Calu3 (cell line): ENCODE measurements at regions of chr14 and their contacts with region 1.

Region 1: DNA sequence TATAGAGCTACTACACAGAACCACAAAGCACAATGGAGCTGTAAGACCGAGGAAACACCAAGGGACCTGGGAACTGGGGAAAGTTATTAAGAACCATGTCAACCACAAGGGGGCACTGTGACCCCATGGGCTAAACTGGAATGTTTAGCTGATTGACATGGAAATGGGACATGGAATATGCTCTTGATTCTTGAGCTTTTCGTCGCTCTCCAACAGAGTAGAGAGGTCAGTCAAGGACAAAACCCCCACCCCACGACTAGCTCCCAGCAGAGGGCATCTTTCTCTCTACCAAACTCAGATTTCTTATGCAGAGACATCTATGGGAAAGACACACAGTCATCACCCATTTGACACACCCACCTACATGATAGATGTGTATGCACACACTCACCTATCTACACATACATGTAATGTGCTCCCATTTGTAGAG is 10.1 kb downstream of the NDRG2 start:
- DNase-seq: peak; percentile 85
- H3K4me3 Mint-ChIP-seq: no peak overlapping the region
- H3K27ac Mint-ChIP-seq: no peak overlapping the region
- H3K4me1 Mint-ChIP-seq: no peaks in the 10 kb centered on the region
- H3K27me3 Mint-ChIP-seq: peaks cover 38% of the 10 kb centered on the region
- CTCF ChIP-seq: peak; percentile 73

Region 2: DNA sequence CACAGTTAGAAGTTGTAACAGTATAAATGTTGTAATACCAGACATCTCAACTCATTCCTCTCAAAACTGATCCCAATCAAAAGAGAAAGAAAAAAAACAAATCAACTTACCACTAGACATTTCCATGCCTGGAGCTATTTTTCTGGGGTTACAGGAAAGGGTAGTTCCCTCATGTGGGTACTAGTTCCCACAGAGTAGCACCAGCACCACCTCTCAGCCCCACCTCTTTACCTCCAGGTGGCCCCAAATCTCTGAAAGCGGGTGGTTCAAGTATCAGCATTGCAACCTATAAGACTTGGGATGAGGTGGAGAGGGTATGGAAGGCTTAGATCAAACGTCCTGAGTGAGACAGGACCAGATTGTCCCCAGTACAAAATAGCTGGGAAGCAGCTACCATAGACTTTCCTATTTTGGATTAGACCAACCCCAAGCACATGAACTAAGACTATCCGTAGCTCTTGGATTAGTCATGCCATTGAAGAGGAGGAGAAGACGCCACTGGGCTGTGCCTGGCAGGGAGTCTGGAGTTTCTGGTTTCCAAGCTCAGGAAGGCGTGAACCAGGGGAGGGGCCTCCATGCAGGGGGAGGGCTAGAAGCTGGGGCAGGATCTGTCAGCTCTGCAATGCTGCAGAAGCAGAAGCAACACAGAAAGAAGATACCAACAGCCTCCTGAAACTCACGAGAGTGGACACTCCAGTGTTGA is 16.0 kb before region 1 on chr14 and contains the start of gene SLC39A2:
- CTCF ChIA-PET with region 1: interaction called, 15 read pairs
- intact Hi-C with region 1: no loop called
- DNase-seq: peak; percentile 31
- H3K4me3 Mint-ChIP-seq: no peak within 1 kb of the TSS
- H3K27ac Mint-ChIP-seq: peak within 1 kb of the TSS; percentile 37
- H3K4me1 Mint-ChIP-seq: peaks cover 32% of the 10 kb centered on the region
- H3K27me3 Mint-ChIP-seq: no peaks in the 10 kb centered on the region
- CTCF ChIP-seq: no peak
- total RNA-seq, gene SLC39A2: not detected in 2 replicates

Region 3: GRCh38 chr14:21033133-21033698 is 18.4 kb after region 1 on chr14:
- CTCF ChIA-PET with region 1: interaction called, 10 read pairs
- intact Hi-C with region 1: no loop called
- DNase-seq: no peak
- H3K4me3 Mint-ChIP-seq: no peak overlapping the region
- H3K27ac Mint-ChIP-seq: no peak overlapping the region
- H3K4me1 Mint-ChIP-seq: peaks cover 5% of the 10 kb centered on the region
- H3K27me3 Mint-ChIP-seq: peaks cover 83% of the 10 kb centered on the region
- CTCF ChIP-seq: no peak

Region 4: GRCh38 chr14:21071225-21072030 is 56.7 kb after region 1 on chr14:
- CTCF ChIA-PET with region 1: interaction called, 36 read pairs
- intact Hi-C with region 1: no loop called
- DNase-seq: peak; percentile 58
- H3K4me3 Mint-ChIP-seq: peak overlapping the region; percentile 97
- H3K27ac Mint-ChIP-seq: peak overlapping the region; percentile 35
- H3K4me1 Mint-ChIP-seq: peaks cover 8% of the 10 kb centered on the region
- H3K27me3 Mint-ChIP-seq: peaks cover 34% of the 10 kb centered on the region
- CTCF ChIP-seq: no peak

Region 5: GRCh38 chr14:21092273-21093011 is 77.7 kb after region 1 on chr14:
- CTCF ChIA-PET with region 1: interaction called, 18 read pairs
- intact Hi-C with region 1: loop called (anchors 2 kb)
- DNase-seq: peak; percentile 90
- H3K4me3 Mint-ChIP-seq: peak overlapping the region; percentile 24
- H3K27ac Mint-ChIP-seq: peak overlapping the region; percentile 3
- H3K4me1 Mint-ChIP-seq: peaks cover 8% of the 10 kb centered on the region
- H3K27me3 Mint-ChIP-seq: no peaks in the 10 kb centered on the region
- CTCF ChIP-seq: peak; percentile 99

Region 6: DNA sequence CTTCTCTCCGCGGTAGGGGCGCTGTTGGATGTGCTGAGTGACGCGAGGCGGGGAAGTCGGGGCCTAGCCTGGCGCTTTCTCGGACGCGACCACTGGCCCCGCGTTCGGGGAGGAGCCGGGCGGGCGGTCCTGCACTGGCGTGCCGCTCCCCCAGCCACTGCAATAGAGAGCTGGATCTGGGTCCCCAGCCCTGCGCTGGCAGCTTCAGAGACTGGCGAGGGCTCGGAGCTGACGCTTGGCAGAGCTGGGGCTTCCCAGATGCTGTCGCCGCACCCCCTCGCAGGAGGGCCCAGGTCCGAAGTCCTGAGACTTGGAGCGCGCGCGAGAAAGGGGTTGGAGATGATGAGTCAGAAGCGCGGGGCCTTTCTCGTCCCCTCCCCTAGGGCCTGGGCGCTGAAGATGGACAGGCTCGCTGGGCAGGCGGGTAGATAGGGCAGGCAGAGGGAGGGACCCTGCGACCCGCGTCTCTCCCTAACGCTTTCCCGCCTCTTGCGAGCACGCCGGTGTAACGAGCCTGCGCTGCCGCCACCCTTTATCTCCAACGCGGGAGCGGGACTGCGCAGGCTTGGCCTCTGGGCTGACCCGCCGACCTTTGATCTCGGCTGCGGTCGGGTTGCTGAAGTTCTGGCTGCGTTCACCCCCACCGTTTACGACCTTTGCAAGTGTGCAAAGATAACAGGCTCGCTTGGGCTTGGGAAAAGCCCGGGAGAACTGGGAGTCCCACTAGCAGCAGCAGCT is 89.1 kb after region 1 on chr14:
- CTCF ChIA-PET with region 1: interaction called, 51 read pairs
- intact Hi-C with region 1: loop called (anchors 1 kb)
- DNase-seq: peak; percentile 93
- H3K4me3 Mint-ChIP-seq: peak overlapping the region; percentile 77
- H3K27ac Mint-ChIP-seq: peak overlapping the region; percentile 57
- H3K4me1 Mint-ChIP-seq: peaks cover 56% of the 10 kb centered on the region
- H3K27me3 Mint-ChIP-seq: no peaks in the 10 kb centered on the region
- CTCF ChIP-seq: peak; percentile 68

Region 7: DNA sequence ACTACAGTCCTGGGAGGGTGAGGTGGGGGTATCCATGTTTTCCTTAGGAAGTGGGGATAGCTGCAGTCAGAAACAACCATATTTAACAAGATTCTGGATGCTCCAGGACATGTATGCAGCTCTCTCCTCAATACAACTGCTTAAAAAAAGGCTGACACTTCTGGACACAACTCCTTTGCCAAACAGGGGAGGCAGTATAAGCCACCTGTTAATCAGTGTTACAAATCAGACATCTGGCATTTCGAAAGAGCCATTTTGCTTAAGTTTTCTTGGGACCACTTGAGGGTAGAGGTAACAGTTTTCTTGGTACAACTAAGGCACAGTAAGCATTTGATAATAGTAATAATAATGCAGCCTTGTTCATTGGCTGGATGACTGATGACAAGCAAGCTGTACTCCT is 312.2 kb after region 1 on chr14:
- CTCF ChIA-PET with region 1: no interaction called
- intact Hi-C with region 1: no loop called
- DNase-seq: no peak
- H3K4me3 Mint-ChIP-seq: no peak overlapping the region
- H3K27ac Mint-ChIP-seq: no peak overlapping the region
- H3K4me1 Mint-ChIP-seq: no peaks in the 10 kb centered on the region
- H3K27me3 Mint-ChIP-seq: peaks cover 48% of the 10 kb centered on the region
- CTCF ChIP-seq: no peak